Right ventricle myocardium inferior (tissue), 1 donor: ENCODE measurements at regions of chr1 and their contacts with region 1.

Region 1: GRCh38 chr1:27102707-27103491 is 52.0 kb downstream of the SLC9A1 start:
- DNase-seq: peak; percentile 88
- ATAC-seq: peak; percentile 34

Region 2: GRCh38 chr1:27201295-27201694 is 98.4 kb after region 1 on chr1:
- intact Hi-C with region 1: loop called (anchors 1 kb)
- DNase-seq: no peak
- ATAC-seq: no peak

Region 3: DNA sequence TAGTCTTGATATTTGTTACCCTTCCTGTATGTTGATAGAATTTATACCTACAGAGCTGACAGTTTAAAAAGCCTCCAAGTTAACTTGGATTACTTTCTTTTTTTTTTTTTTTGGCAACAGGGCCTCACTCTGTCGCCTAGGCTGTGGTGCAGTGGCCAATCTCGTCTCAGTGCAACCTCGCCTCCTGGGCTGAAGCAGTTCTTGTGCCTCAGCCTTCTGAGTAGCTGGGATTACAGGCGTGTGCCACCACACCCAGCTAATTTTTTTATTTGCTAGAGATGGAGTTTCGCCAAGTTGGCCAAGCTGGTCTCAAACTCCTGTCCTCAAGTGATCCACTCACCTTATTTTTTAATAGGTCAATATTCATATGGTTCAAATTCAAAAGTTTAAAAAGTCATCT is 164.3 kb after region 1 on chr1:
- intact Hi-C with region 1: no loop called
- DNase-seq: no peak
- ATAC-seq: no peak